Naive thymus-derived CD4-positive, alpha-beta T cell (primary cell): ENCODE measurements at regions of chr2 and their contacts with region 1.

Region 1: DNA sequence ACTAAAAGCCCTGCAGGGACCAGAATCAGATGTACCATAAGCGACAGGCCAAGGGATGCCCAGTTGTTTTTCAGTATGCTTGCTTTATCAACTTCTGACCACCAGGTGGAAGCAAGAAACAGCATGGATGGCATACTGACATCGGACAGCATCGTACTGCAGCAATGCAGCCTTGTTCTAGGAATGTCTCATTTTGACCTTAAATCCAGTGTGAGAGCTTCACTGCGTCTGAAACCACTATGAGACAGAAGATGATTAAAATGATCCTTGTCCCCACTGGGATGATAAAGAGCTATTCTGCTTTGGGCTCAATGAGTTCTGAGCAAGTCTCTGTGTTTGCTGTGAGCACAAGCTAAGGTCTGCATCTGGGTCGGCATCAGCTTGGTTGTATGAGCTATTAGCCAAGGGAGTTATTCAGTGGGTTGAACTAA is 54.3 kb downstream of the CDK15 start:
- DNase-seq: peak in 8 of 9 donors; percentile 15 to 60 (median 36)
- ATAC-seq: peak; percentile 75
- H3K4me3 ChIP-seq: no peak overlapping the region
- H3K4me3 Mint-ChIP-seq: peak overlapping the region in 6 of 10 donors; percentile 15 to 57 (median 26)
- H3K27ac ChIP-seq: no peak overlapping the region
- H3K27ac Mint-ChIP-seq: no peak overlapping the region
- H3K4me1 ChIP-seq: peaks cover 0 to 8% of the 10 kb centered on the region in 2 donors
- H3K4me1 Mint-ChIP-seq: peaks cover 13 to 24% (median 20%) of the 10 kb centered on the region in 7 donors
- H3K27me3 ChIP-seq: no peaks in the 10 kb centered on the region
- H3K27me3 Mint-ChIP-seq: peaks cover 7 to 47% (median 30%) of the 10 kb centered on the region in 5 donors

Region 2: GRCh38 chr2:201208563-201209252 is 651.9 kb before region 1 on chr2:
- CTCF ChIA-PET with region 1: no interaction called
- POLR2A ChIA-PET with region 1: no interaction called
- intact Hi-C with region 1: no loop called
- DNase-seq: no peak
- ATAC-seq: peak; percentile 75
- H3K4me3 ChIP-seq: no peak overlapping the region
- H3K4me3 Mint-ChIP-seq: no peak overlapping the region
- H3K27ac ChIP-seq: no peak overlapping the region
- H3K27ac Mint-ChIP-seq: peak overlapping the region in 7 of 9 donors; percentile 20 to 63 (median 31)
- H3K4me1 ChIP-seq: peaks cover 0 to 29% of the 10 kb centered on the region in 2 donors
- H3K4me1 Mint-ChIP-seq: peaks cover 18 to 62% (median 33%) of the 10 kb centered on the region in 7 donors
- H3K27me3 ChIP-seq: no peaks in the 10 kb centered on the region
- H3K27me3 Mint-ChIP-seq: no peaks in the 10 kb centered on the region

Region 3: DNA sequence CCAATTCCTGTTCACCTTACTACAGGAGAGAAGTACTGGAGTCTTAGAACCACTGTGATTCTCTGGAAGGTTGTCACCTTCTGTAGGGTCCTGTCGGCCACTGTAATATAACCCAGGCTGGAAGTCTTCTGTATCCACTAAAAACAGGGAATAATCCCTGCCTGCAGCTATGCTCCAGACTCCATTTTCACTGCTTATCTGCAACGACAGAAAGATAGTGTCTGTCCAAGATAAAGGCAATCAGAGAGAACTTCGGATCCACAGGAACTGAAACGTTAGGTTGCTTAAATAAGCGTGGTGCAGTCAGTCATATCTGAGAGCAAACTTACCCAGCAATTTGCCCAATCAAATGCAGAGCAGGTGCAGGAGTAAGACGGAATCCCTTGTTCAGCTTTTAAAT is 114.1 kb before region 1 on chr2:
- CTCF ChIA-PET with region 1: no interaction called
- POLR2A ChIA-PET with region 1: no interaction called
- intact Hi-C with region 1: no loop called
- DNase-seq: no peak
- ATAC-seq: no peak
- H3K4me3 ChIP-seq: no peak overlapping the region
- H3K4me3 Mint-ChIP-seq: no peak overlapping the region
- H3K27ac ChIP-seq: no peak overlapping the region
- H3K27ac Mint-ChIP-seq: no peak overlapping the region
- H3K4me1 ChIP-seq: no peaks in the 10 kb centered on the region
- H3K4me1 Mint-ChIP-seq: peaks cover 0 to 1% (median 0%) of the 10 kb centered on the region in 7 donors
- H3K27me3 ChIP-seq: no peaks in the 10 kb centered on the region
- H3K27me3 Mint-ChIP-seq: no peaks in the 10 kb centered on the region

Region 4: GRCh38 chr2:201882353-201883090 is 21.9 kb after region 1 on chr2:
- CTCF ChIA-PET with region 1: no interaction called
- POLR2A ChIA-PET with region 1: no interaction called
- intact Hi-C with region 1: loop called in 1 of 2 experiments (anchors 2 kb)
- DNase-seq: no peak
- ATAC-seq: no peak
- H3K4me3 ChIP-seq: no peak overlapping the region
- H3K4me3 Mint-ChIP-seq: peak overlapping the region in 9 of 10 donors; percentile 25 to 78 (median 59)
- H3K27ac ChIP-seq: no peak overlapping the region
- H3K27ac Mint-ChIP-seq: peak overlapping the region in 1 of 9 donors; percentile 16
- H3K4me1 ChIP-seq: no peaks in the 10 kb centered on the region
- H3K4me1 Mint-ChIP-seq: peaks cover 6 to 27% (median 15%) of the 10 kb centered on the region in 7 donors
- H3K27me3 ChIP-seq: no peaks in the 10 kb centered on the region
- H3K27me3 Mint-ChIP-seq: peaks cover 47 to 75% (median 59%) of the 10 kb centered on the region in 5 donors

Region 5: GRCh38 chr2:201955702-201956141 is 95.1 kb after region 1 on chr2:
- CTCF ChIA-PET with region 1: no interaction called
- POLR2A ChIA-PET with region 1: no interaction called
- intact Hi-C with region 1: no loop called
- DNase-seq: no peak
- ATAC-seq: no peak
- H3K4me3 ChIP-seq: no peak overlapping the region
- H3K4me3 Mint-ChIP-seq: no peak overlapping the region
- H3K27ac ChIP-seq: no peak overlapping the region
- H3K27ac Mint-ChIP-seq: no peak overlapping the region
- H3K4me1 ChIP-seq: no peaks in the 10 kb centered on the region
- H3K4me1 Mint-ChIP-seq: peaks cover 0 to 3% (median 0%) of the 10 kb centered on the region in 7 donors
- H3K27me3 ChIP-seq: no peaks in the 10 kb centered on the region
- H3K27me3 Mint-ChIP-seq: peaks cover 3 to 22% (median 15%) of the 10 kb centered on the region in 5 donors

Region 6: GRCh38 chr2:202056392-202057010 is 195.8 kb after region 1 on chr2:
- CTCF ChIA-PET with region 1: interaction called, 7 read pairs
- POLR2A ChIA-PET with region 1: no interaction called
- intact Hi-C with region 1: loop called (anchors 1 to 5 kb)
- DNase-seq: peak in 3 of 9 donors; percentile 8 to 11 (median 9)
- ATAC-seq: no peak
- H3K4me3 ChIP-seq: no peak overlapping the region
- H3K4me3 Mint-ChIP-seq: no peak overlapping the region
- H3K27ac ChIP-seq: no peak overlapping the region
- H3K27ac Mint-ChIP-seq: no peak overlapping the region
- H3K4me1 ChIP-seq: no peaks in the 10 kb centered on the region
- H3K4me1 Mint-ChIP-seq: no peaks in the 10 kb centered on the region
- H3K27me3 ChIP-seq: no peaks in the 10 kb centered on the region
- H3K27me3 Mint-ChIP-seq: peaks cover 35 to 47% (median 41%) of the 10 kb centered on the region in 5 donors